Naive thymus-derived CD4-positive, alpha-beta T cell (primary cell): ENCODE measurements at regions of chr21 and their contacts with region 1.

Region 1: GRCh38 chr21:42781150-42781970 is 98.0 kb downstream of the WDR4 start:
- DNase-seq: peak in 1 of 9 donors; percentile 11
- ATAC-seq: no peak
- H3K4me3 ChIP-seq: peak overlapping the region; percentile 30
- H3K4me3 Mint-ChIP-seq: peak overlapping the region; percentile 40 to 92 (median 80)
- H3K27ac ChIP-seq: peak overlapping the region; percentile 7
- H3K27ac Mint-ChIP-seq: peak overlapping the region; percentile 31 to 100 (median 87)
- H3K4me1 ChIP-seq: peaks cover 14 to 44% of the 10 kb centered on the region in 2 donors
- H3K4me1 Mint-ChIP-seq: peaks cover 35 to 65% (median 48%) of the 10 kb centered on the region in 7 donors
- H3K27me3 ChIP-seq: no peaks in the 10 kb centered on the region
- H3K27me3 Mint-ChIP-seq: peaks cover 0 to 37% (median 0%) of the 10 kb centered on the region in 5 donors

Region 2: DNA sequence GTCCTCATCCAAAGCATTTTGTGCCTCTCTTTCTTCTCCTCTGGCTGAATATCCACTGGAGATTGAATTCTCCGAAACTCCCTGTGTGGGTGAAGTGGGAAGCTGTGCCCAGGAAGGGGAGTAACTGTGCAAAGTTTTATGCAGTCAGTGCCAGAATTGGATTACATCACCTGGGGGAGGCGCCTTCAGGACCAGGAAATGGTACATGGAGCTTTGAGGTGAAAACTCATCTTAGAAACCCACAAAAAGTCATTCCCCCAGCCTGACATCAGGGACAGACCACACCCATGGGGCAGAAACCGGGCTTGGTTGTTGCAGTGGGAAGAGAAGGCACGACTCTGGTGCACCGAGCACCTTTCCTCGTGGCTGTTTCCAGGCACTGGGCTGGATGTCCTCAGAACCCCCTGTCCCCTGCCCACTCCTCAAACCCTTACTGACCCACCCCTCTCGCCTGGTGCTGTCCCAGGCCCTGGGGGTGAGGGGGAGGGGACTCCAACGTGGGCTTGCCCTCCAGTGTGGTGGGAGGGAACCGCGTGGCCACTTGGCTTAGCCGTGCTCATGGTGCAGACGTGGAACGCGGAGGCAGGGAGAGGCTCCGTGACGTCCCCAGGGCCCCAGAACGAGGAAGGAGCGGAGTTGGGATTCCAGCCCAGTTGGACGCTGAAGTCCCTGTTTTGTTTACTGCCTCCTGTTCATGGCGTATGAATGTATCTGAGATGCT is 481.9 kb before region 1 on chr21:
- CTCF ChIA-PET with region 1: no interaction called
- POLR2A ChIA-PET with region 1: no interaction called
- intact Hi-C with region 1: no loop called
- DNase-seq: peak in 4 of 9 donors; percentile 9 to 33 (median 19)
- ATAC-seq: peak; percentile 32
- H3K4me3 ChIP-seq: no peak overlapping the region
- H3K4me3 Mint-ChIP-seq: peak overlapping the region in 1 of 10 donors; percentile 3
- H3K27ac ChIP-seq: no peak overlapping the region
- H3K27ac Mint-ChIP-seq: peak overlapping the region in 3 of 9 donors; percentile 19 to 65 (median 23)
- H3K4me1 ChIP-seq: peaks cover 0 to 12% of the 10 kb centered on the region in 2 donors
- H3K4me1 Mint-ChIP-seq: peaks cover 0 to 21% (median 18%) of the 10 kb centered on the region in 7 donors
- H3K27me3 ChIP-seq: no peaks in the 10 kb centered on the region
- H3K27me3 Mint-ChIP-seq: no peaks in the 10 kb centered on the region

Region 3: GRCh38 chr21:42652527-42653230 is 128.7 kb before region 1 on chr21:
- CTCF ChIA-PET with region 1: interaction called, 3 read pairs
- POLR2A ChIA-PET with region 1: interaction called, 11 read pairs
- intact Hi-C with region 1: no loop called
- DNase-seq: no peak
- ATAC-seq: no peak
- H3K4me3 ChIP-seq: no peak overlapping the region
- H3K4me3 Mint-ChIP-seq: peak overlapping the region; percentile 68 to 88 (median 84)
- H3K27ac ChIP-seq: no peak overlapping the region
- H3K27ac Mint-ChIP-seq: peak overlapping the region in 8 of 9 donors; percentile 1 to 86 (median 68)
- H3K4me1 ChIP-seq: peaks cover 0 to 15% of the 10 kb centered on the region in 2 donors
- H3K4me1 Mint-ChIP-seq: peaks cover 17 to 29% (median 24%) of the 10 kb centered on the region in 7 donors
- H3K27me3 ChIP-seq: peaks cover 0 to 4% of the 10 kb centered on the region in 2 donors
- H3K27me3 Mint-ChIP-seq: peaks cover 0 to 50% (median 0%) of the 10 kb centered on the region in 5 donors

Region 4: GRCh38 chr21:42878993-42879787 is 97.8 kb after region 1 on chr21 and contains the start of gene WDR4:
- CTCF ChIA-PET with region 1: no interaction called
- POLR2A ChIA-PET with region 1: interaction called, 3 read pairs
- intact Hi-C with region 1: loop called in 1 of 2 experiments (anchors 2 kb)
- DNase-seq: peak; percentile 97 to 100 (median 99)
- ATAC-seq: peak; percentile 97
- H3K4me3 ChIP-seq: peak within 1 kb of the TSS; percentile 66
- H3K4me3 Mint-ChIP-seq: peak within 1 kb of the TSS; percentile 93 to 99 (median 97)
- H3K27ac ChIP-seq: peak within 1 kb of the TSS; percentile 85
- H3K27ac Mint-ChIP-seq: peak within 1 kb of the TSS; percentile 94 to 100 (median 98)
- H3K4me1 ChIP-seq: peaks cover 12 to 15% of the 10 kb centered on the region in 2 donors
- H3K4me1 Mint-ChIP-seq: peaks cover 17 to 41% (median 29%) of the 10 kb centered on the region in 7 donors
- H3K27me3 ChIP-seq: no peaks in the 10 kb centered on the region
- H3K27me3 Mint-ChIP-seq: peaks cover 0 to 6% (median 0%) of the 10 kb centered on the region in 5 donors
- total RNA-seq, gene WDR4: 24.4 to 39.1 (median 30.5) TPM

Region 5: GRCh38 chr21:43789276-43790009 is 1008.1 kb after region 1 on chr21 and contains the start of gene RRP1:
- CTCF ChIA-PET with region 1: no interaction called
- POLR2A ChIA-PET with region 1: no interaction called
- intact Hi-C with region 1: no loop called
- DNase-seq: peak; percentile 88 to 100 (median 96)
- ATAC-seq: peak; percentile 99
- H3K4me3 ChIP-seq: peak within 1 kb of the TSS; percentile 87
- H3K4me3 Mint-ChIP-seq: peak within 1 kb of the TSS; percentile 86 to 94 (median 92)
- H3K27ac ChIP-seq: peak within 1 kb of the TSS; percentile 84
- H3K27ac Mint-ChIP-seq: peak within 1 kb of the TSS; percentile 74 to 95 (median 91)
- H3K4me1 ChIP-seq: peaks cover 5 to 10% of the 10 kb centered on the region in 2 donors
- H3K4me1 Mint-ChIP-seq: peaks cover 7 to 29% (median 21%) of the 10 kb centered on the region in 7 donors
- H3K27me3 ChIP-seq: no peaks in the 10 kb centered on the region
- H3K27me3 Mint-ChIP-seq: no peaks in the 10 kb centered on the region
- total RNA-seq, gene RRP1: 24.2 to 33.1 (median 28.8) TPM